GM10248 (cell line): ENCODE measurements at regions of chr6 and their contacts with region 1.

Region 1: DNA sequence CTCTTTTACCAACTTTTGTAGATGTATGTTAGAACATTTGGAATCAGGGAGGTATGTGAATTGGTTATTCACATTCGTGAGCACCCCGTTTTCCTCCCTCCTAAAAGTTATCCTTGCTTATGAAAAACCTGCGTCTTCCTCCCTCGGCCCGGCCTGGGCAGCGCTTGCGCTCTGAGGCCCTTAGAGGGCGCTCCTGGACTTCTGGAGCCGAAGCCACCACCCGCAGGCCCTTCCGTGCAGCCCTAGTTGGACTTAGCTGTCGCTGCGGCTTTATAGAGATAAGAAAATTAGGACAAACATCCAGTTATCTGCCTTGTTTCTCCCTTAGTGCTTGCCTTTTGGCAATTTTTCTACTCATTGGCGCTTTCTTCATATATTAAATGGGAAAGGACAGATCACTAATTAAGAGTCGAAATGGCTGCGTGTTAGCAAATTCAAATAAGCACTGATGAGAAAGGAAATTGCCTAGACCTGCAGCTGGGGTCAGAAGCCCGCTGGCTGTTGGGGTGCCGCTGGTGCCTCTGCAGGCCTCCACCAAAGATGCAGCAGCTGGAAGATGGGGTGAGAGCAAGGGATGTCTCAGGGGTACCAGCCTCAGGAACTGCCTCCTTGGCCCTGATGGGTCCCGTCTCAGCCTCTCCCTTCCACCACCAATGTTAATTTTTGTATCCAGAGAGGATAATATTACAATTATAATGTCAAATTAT is 5.2 kb downstream of the FNDC1 start:
- DNase-seq: peak; percentile 77
- CTCF ChIP-seq: peak; percentile 99

Region 2: DNA sequence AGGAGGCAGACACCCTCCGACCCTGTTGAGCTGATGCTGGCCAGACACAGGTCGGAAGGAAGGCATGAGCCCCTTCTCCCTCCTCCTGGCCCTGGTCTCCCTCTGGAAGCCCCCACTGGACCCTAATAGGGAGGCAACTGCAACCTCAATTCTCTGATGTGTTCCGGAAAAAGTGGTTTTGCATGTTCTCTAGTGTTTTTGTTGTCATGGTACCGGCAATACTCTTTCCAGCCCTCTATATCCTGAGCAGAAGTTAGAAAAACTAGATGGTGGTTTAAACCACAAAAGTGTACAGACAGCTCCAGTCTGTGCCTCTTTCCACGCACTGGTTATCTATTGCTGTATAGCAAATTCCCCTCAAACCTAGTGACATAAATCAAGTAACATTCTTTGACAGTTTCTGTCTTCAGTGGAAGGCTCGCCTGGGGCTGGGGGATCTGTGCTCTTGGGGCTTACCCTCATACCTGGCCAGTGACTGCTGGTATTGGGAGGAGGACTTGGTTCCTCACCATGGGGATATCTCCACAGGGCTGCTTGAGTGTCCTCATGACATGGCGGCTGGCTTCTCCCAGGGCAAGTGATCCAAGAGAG is 487.5 kb before region 1 on chr6:
- CTCF ChIA-PET with region 1: no interaction called
- POLR2A ChIA-PET with region 1: no interaction called
- DNase-seq: peak; percentile 46
- CTCF ChIP-seq: no peak

Region 3: DNA sequence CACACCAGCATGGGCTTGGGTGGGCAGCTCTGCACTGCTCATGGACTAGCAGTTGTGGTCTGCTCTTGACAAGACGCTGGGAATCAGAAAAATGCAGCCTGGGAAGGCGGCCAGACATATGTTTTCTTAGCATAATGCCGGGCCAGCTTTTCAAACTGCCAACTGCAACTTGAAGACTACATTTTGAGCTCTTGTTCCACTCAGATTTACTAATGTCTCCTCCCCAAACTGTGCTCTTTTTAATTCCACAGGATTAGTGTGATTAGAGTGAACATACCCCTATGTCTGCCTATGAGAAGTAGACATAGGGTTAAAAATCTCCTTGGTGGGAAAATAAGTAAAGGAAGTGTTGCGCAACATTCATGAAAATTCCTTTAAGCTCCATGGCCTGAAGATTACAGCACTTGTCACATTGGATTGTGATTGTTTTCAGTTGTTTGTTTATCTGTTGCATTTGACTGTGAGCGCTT is 10.5 kb before region 1 on chr6:
- CTCF ChIA-PET with region 1: interaction called, 10 read pairs
- POLR2A ChIA-PET with region 1: no interaction called
- DNase-seq: no peak
- CTCF ChIP-seq: no peak

Region 4: DNA sequence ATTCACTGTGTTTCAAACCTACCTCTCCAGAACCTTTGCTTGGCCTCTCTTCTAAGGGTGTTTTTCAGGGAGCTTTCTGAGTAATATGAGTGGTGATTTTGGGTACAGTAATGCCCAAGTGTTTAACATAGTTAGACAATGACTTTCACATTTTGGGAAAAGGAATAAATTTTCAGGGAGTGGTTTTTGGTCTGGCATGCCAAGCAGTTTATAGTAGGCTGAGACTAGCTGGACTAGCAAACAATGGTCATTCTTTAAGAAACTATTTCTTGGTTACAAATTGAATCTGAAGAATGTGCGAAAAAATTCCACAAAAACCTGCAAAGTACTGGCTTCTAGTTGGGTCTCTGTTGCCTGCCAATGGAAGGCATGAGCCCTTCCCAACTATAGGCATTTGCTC is 10.1 kb after region 1 on chr6:
- CTCF ChIA-PET with region 1: interaction called, 59 read pairs
- POLR2A ChIA-PET with region 1: no interaction called
- DNase-seq: no peak
- CTCF ChIP-seq: no peak

Region 5: DNA sequence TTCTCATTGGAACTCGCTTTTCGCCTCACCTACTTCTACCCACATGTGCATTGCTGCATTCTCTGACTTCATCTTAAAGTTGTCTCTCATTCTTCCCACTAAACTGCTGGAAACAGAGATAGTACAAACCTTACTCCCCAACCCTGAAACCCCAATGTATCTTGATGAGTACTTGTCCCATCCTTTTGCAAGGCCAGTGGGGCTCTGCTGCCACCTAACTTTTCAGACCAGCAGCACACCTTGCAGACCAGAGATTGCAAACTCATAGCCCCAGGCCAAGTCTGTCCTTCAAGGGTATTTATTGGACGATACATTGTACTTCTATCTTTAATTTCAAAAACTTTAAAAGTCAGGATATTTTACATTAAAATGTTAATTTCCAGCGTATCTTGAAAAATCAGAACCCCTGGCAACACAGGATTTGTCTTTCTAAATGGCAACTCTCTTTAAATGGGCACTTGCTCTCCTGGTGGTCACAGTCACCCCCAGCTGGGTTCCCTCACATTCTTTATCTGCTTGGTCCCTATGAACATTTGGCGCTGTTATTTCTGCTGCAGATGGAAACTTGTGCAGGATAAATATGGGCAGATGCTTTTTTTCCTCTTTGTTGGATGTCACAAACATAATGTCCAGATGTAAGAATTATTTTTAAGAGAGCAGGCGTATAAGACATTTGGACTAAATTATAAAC is 434.7 kb after region 1 on chr6:
- CTCF ChIA-PET with region 1: interaction called, 29 read pairs
- POLR2A ChIA-PET with region 1: no interaction called
- DNase-seq: peak; percentile 57
- CTCF ChIP-seq: peak; percentile 66